Prostate gland (tissue), 2 donors: ENCODE measurements at regions of chr11 and their contacts with region 1.

Region 1: GRCh38 chr11:65625628-65626342 is 10.2 kb downstream of the PCNX3 start:
- DNase-seq: peak; percentile 38
- H3K4me3 ChIP-seq: no peak overlapping the region
- H3K27ac ChIP-seq: no peak overlapping the region
- H3K4me1 ChIP-seq: no peaks in the 10 kb centered on the region
- H3K27me3 ChIP-seq: no peaks in the 10 kb centered on the region
- CTCF ChIP-seq: peak in 3 of 4 experiments; percentile 41 to 73 (median 58)
- POLR2A ChIP-seq: no peak

Region 2: DNA sequence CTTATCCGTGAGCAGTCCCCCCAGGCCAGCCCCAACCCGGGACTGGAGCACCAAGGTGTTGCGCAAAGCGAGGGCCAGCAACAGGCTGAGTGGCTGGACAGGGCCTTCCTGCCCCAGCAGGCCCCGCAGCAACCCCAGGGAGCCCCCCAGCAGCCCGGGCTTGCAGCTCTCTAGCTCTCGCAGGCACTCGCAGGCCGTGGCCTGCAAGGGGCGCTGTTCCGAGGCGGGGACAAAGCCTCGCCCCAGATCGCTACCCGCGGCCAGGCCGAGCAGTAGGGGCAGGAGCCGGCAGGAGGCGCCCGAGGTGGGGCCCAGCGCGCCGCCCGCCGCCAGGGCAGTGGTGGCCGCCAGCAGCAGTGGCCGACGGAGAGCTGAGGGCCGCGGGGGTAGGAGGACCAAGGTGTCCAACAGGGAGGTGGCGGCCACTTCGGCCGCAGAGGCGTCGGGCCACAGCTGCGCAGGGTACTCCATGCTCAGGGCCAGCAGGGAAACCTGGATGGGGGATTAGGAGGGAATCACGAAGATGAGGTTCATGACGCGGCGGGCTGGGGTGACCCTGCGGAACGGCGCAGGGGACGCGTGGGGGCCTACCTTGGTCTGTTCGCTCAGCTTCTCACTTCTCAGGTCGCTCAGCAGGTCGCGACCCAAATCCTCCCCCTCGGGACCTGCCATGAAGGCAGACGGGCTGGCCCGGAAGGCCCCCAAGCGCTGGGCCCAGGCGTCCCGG is 154.2 kb after region 1 on chr11:
- intact Hi-C with region 1: loop called (anchors 10 kb)
- DNase-seq: peak; percentile 71
- H3K4me3 ChIP-seq: peak overlapping the region; percentile 84 to 88
- H3K27ac ChIP-seq: peak overlapping the region; percentile 72 to 80
- H3K4me1 ChIP-seq: peaks cover 13% of the 10 kb centered on the region
- H3K27me3 ChIP-seq: no peaks in the 10 kb centered on the region
- CTCF ChIP-seq: peak; percentile 92 to 100 (median 96)
- POLR2A ChIP-seq: peak; percentile 63